GM13976 (cell line): ENCODE measurements at regions of chr12 and their contacts with region 1.

Region 1: GRCh38 chr12:11233532-11233931 is 36.0 kb downstream of the PRB3 start:
- DNase-seq: no peak
- CTCF ChIP-seq: no peak

Region 2: DNA sequence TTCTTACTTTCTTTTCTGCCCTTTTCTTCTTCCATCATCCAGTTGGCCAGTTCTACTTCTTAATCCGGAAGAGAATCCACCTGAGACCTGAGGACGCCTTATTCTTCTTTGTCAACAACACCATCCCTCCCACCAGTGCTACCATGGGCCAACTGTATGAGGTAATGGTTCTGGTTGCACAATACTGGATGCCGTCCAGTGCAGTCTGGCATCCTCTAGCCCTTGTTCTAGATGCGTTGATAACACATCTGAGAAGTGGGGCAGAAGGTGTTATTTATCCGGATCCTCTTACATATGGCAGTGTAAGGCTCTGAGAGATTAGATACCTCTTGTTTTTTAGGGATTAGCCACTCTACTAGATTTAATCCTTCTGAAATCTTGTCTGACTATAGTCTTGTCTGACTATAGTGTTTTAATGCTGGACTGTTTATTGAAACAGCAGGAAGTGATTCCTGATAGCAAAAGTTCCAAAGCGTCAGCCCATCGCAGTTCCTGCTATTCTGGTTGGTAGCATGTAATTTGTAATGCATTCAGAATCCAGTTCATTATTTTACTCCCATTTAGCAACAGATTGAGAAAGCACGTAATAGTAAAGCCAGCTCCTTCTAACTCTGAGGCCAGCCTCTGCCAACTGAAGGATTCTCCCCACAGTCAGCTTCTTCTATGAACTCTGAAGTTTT is 1013.0 kb before region 1 on chr12:
- in situ Hi-C with region 1: no loop called
- DNase-seq: no peak
- CTCF ChIP-seq: no peak

Region 3: DNA sequence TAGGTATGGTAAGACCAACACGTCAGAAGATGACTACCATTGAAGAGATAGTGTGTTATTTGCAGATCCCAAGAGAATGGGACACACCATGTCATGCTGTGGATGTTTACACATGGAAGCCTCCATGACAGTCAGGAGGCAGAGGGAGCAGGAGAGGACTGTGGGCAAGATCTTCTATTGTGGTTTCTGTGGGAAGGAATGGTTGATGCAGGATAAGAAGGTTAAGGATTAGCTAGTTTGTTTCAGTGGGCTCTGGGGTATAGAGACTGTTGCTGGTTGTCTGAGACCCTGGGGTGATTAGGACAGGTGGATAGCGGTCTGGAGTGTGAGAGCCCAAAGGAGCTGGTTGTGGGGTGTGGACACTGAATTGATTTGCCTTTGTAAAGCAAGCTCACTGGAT is 454.4 kb before region 1 on chr12:
- in situ Hi-C with region 1: no loop called
- DNase-seq: no peak
- CTCF ChIP-seq: no peak

Region 4: DNA sequence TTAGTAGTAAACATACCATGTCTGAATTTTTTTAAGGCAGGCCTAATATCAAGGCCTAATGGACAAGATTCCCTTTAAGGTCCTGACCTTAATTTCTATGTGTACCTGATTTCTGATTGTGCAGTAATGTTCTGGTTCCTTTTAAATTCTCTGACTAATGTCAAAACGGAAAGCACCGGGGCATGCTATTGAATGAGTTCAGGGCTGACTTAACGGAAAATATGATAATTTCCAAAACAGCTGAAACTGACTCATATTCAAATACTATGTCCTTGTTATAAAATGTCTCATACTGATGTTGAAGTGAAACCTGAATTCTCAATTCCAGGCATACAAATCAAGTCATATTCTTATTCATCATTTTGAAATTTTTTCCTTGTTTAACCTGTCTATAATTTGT is 148.1 kb before region 1 on chr12:
- in situ Hi-C with region 1: no loop called
- DNase-seq: peak; percentile 8
- CTCF ChIP-seq: no peak

Region 5: GRCh38 chr12:11486623-11487444 is 253.3 kb after region 1 on chr12:
- in situ Hi-C with region 1: loop called (anchors 5 kb)
- DNase-seq: peak; percentile 72
- CTCF ChIP-seq: peak; percentile 75

Region 6: GRCh38 chr12:11513288-11513687 is 279.8 kb after region 1 on chr12:
- in situ Hi-C with region 1: no loop called
- DNase-seq: no peak
- CTCF ChIP-seq: no peak